ENCODE measurements at regions of chr22 and their contacts with region 1.

Region 1: GRCh38 chr22:35638001-35638400 is 10.2 kb upstream of the APOL6 start:
- DNase-seq: no peak
- ATAC-seq: peak; percentile 36; the same call in 1 of the 2 replicates
- H3K4me3 ChIP-seq: no peak overlapping the region
- H3K27ac ChIP-seq: peak overlapping the region; percentile 70; the same call in 1 of the 2 replicates
- H3K4me1 ChIP-seq: peaks cover 10% of the 10 kb centered on the region
- H3K27me3 ChIP-seq: no peaks in the 10 kb centered on the region
- CTCF ChIP-seq: no peak

Region 2: DNA sequence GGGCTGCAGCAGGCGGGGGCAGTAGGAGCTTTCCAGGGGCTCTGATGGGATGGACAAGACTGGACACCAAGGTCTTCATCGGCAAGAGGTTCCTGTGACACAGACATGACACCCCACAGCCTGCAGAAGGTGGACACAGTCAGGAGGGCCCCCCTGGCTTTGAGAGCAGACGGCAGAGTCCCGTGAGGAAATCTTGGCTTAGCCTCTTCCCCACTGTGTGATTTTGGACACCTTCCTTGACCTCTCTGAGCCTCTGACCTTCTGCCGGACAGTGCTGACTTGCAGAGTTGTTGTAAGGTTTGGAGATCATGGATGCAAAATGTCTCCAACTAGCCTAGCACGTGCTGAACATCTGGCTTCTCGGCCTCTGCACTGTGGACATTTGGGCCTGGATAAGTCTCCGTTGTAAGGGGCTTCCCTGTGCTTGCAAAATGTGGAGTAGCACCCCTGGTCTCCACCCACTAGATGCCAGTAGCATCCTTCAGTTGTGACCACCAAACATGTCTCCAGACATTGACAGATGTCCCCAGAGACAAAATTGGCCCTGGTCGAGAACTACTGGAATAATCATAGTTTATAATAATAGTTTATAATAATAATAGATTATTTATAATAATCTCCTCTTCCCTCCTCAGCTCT is 183.5 kb before region 1 on chr22:
- CTCF ChIA-PET with region 1: no interaction called
- POLR2A ChIA-PET with region 1: no interaction called
- in situ Hi-C with region 1: no loop called
- intact Hi-C with region 1: no loop called
- DNase-seq: no peak
- ATAC-seq: no peak
- H3K4me3 ChIP-seq: no peak overlapping the region
- H3K27ac ChIP-seq: no peak overlapping the region
- H3K4me1 ChIP-seq: no peaks in the 10 kb centered on the region
- H3K27me3 ChIP-seq: no peaks in the 10 kb centered on the region
- CTCF ChIP-seq: no peak

Region 3: DNA sequence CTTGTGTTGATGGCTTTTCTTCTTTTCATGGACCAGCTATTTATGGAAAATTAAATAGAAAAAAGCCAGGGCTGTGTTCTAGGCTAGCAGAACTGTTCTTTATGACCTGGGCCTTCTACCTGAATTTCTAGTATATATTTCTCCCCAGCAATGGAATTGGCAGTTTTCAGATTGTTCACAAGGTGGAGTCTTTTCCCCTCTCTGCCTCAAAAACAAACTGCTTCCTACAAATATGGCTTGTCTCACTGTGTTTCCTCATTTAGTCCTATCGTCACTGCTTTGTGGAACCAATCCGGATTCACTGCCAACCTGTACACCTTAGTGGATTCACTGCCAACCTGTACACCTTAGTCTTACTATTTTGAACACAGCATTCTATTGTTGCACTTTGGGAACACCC is 74.7 kb after region 1 on chr22:
- CTCF ChIA-PET with region 1: no interaction called
- POLR2A ChIA-PET with region 1: interaction called, 14 read pairs
- in situ Hi-C with region 1: no loop called
- intact Hi-C with region 1: no loop called
- DNase-seq: no peak
- ATAC-seq: no peak
- H3K4me3 ChIP-seq: no peak overlapping the region
- H3K27ac ChIP-seq: no peak overlapping the region
- H3K4me1 ChIP-seq: no peaks in the 10 kb centered on the region
- H3K27me3 ChIP-seq: no peaks in the 10 kb centered on the region
- CTCF ChIP-seq: no peak

Region 4: GRCh38 chr22:36741204-36741793 is 1103.3 kb after region 1 on chr22:
- CTCF ChIA-PET with region 1: no interaction called
- POLR2A ChIA-PET with region 1: no interaction called
- in situ Hi-C with region 1: no loop called
- intact Hi-C with region 1: no loop called
- DNase-seq: no peak
- ATAC-seq: no peak
- H3K4me3 ChIP-seq: no peak overlapping the region
- H3K27ac ChIP-seq: no peak overlapping the region
- H3K4me1 ChIP-seq: no peaks in the 10 kb centered on the region
- H3K27me3 ChIP-seq: no peaks in the 10 kb centered on the region
- CTCF ChIP-seq: no peak

Measured in Panc1 (cell line).